Activated naive CD4-positive, alpha-beta T cell treated with anti-CD3 and anti-CD28 coated beads for 36 hours (primary cell): ENCODE measurements at regions of chr2 and their contacts with region 1.

Region 1: GRCh38 chr2:120261387-120262006 is 8.8 kb downstream of the RALB start:
- DNase-seq: peak; percentile 72
- H3K4me3 Mint-ChIP-seq: no peak overlapping the region
- H3K27ac Mint-ChIP-seq: no peak overlapping the region
- H3K4me1 Mint-ChIP-seq: peaks cover 17% of the 10 kb centered on the region
- H3K27me3 Mint-ChIP-seq: no peaks in the 10 kb centered on the region

Region 2: DNA sequence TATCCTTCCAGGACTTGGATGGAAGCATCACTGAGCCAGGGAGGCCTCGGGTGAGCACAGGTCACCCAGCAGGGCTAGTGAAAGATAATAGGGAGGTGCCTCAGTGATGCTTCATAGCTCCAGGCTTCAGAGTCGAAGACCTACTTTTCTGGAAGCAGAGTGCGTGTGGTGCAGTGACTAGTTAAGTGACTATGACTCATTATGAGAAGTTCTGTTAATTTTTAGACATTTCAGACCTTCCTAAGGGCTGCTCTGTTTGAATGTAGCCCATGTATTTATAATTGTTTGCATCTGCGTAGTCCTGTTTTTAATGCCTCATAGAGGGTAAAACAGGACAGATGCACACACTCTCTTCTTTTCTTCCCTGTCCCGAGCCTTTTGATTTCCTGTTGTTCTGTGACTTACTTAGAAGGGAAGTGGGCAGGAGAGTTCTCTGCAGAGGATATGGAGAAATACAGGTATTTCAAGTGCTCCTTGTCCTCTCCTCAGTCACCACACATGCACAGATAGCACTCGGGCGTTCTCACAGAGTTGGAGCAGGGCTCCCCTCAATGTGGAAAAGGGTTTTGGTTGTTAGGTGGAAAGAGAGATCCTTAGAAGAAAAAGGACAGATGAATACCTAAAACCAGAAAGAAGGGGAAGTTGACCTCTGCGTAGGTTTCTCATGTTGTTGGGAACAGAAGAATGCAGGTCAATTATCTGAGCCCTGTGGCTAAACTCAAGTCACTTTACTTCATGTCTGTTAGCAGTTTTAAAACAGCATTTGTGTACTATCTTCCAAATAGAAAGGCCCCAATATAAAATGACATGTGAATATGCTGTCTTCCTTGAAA is 25.9 kb after region 1 on chr2:
- CTCF ChIA-PET with region 1: interaction called, 3 read pairs
- intact Hi-C with region 1: loop called (anchors 1 kb)
- DNase-seq: peak; percentile 58
- H3K4me3 Mint-ChIP-seq: no peak overlapping the region
- H3K27ac Mint-ChIP-seq: peak overlapping the region; percentile 55
- H3K4me1 Mint-ChIP-seq: peaks cover 23% of the 10 kb centered on the region
- H3K27me3 Mint-ChIP-seq: no peaks in the 10 kb centered on the region